PC-9 (cell line): ENCODE measurements at regions of chr7 and their contacts with region 1.

Region 1: GRCh38 chr7:133434055-133434865 is 181.4 kb downstream of the EXOC4 start:
- DNase-seq: no peak
- H3K4me3 ChIP-seq: no peak overlapping the region
- H3K27ac ChIP-seq: no peak overlapping the region
- H3K4me1 ChIP-seq: no peaks in the 10 kb centered on the region
- H3K27me3 ChIP-seq: no peaks in the 10 kb centered on the region
- CTCF ChIP-seq: peak; percentile 46

Region 2: GRCh38 chr7:133478591-133479135 is 44.4 kb after region 1 on chr7:
- CTCF ChIA-PET with region 1: no interaction called
- POLR2A ChIA-PET with region 1: interaction called, 20 read pairs
- intact Hi-C with region 1: no loop called
- DNase-seq: no peak
- H3K4me3 ChIP-seq: no peak overlapping the region
- H3K27ac ChIP-seq: no peak overlapping the region
- H3K4me1 ChIP-seq: no peaks in the 10 kb centered on the region
- H3K27me3 ChIP-seq: no peaks in the 10 kb centered on the region
- CTCF ChIP-seq: no peak

Region 3: GRCh38 chr7:133512560-133512959 is 78.3 kb after region 1 on chr7:
- CTCF ChIA-PET with region 1: no interaction called
- POLR2A ChIA-PET with region 1: interaction called, 17 read pairs
- intact Hi-C with region 1: no loop called
- DNase-seq: peak in 1 of 2 experiments; percentile 38
- H3K4me3 ChIP-seq: no peak overlapping the region
- H3K27ac ChIP-seq: no peak overlapping the region
- H3K4me1 ChIP-seq: peaks cover 8% of the 10 kb centered on the region
- H3K27me3 ChIP-seq: no peaks in the 10 kb centered on the region
- CTCF ChIP-seq: no peak